ENCODE measurements at regions of chr1 and their contacts with region 1.

Region 1: DNA sequence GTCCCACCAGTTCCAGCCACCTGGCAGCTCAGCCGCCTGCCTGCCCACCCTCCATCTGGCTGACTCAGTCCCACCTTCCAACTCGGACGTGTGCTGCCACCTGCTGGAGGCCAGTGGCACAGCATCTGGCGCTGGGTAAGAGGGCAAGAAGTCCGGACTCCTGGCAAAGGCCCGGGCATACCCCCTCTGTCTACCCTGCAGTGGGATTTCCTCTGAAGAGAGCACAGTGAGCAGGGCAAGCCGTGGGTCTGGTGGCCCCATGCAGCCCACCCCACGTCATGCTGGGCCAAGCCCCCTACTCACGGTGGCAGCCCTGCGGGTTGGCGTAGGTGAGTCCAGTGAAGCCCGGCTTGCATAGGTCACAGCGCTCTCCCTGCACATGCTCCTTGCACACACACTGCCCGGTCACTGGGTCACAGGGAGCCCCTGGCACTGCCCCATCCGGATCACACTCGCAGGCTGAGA is 24.5 kb downstream of the LAMB3 start:
- DNase-seq: peak; percentile 67
- H3K4me3 Mint-ChIP-seq: no peak overlapping the region
- H3K27ac Mint-ChIP-seq: no peak overlapping the region
- H3K4me1 Mint-ChIP-seq: peaks cover 16% of the 10 kb centered on the region
- H3K27me3 Mint-ChIP-seq: no peaks in the 10 kb centered on the region

Region 2: GRCh38 chr1:209576798-209577197 is 51.0 kb before region 1 on chr1:
- intact Hi-C with region 1: loop called (anchors 1 kb)
- DNase-seq: peak; percentile 49
- H3K4me3 Mint-ChIP-seq: no peak overlapping the region
- H3K27ac Mint-ChIP-seq: no peak overlapping the region
- H3K4me1 Mint-ChIP-seq: peaks cover 7% of the 10 kb centered on the region
- H3K27me3 Mint-ChIP-seq: peaks cover 25% of the 10 kb centered on the region

Region 3: GRCh38 chr1:209601809-209602657 is 25.7 kb before region 1 on chr1:
- intact Hi-C with region 1: loop called (anchors 1 kb)
- DNase-seq: peak; percentile 14
- H3K4me3 Mint-ChIP-seq: no peak overlapping the region
- H3K27ac Mint-ChIP-seq: no peak overlapping the region
- H3K4me1 Mint-ChIP-seq: peaks cover 19% of the 10 kb centered on the region
- H3K27me3 Mint-ChIP-seq: peaks cover 26% of the 10 kb centered on the region

Region 4: DNA sequence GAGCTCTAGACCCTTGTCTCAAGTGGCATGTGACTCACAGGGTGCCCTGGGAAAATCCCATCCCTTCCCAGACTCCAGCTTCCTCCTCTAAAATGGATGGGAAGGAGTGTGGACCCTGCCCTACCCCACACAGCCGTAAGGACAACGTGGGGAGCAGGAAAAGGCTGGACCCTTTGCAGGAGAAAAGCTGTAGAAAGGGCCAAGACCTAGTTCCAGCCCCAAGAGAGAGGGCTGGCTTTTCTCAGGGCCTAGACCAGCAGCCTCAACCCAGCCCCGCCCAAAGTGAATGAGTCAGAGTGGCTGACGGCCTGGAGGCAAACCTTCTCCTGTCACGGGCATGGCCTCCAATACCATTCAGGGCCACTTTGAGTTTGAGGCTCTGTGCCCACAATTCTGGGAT is 23.4 kb after region 1 on chr1:
- intact Hi-C with region 1: loop called (anchors 2 kb)
- DNase-seq: peak; percentile 70
- H3K4me3 Mint-ChIP-seq: peak overlapping the region; percentile 58
- H3K27ac Mint-ChIP-seq: peak overlapping the region; percentile 96
- H3K4me1 Mint-ChIP-seq: peaks cover 76% of the 10 kb centered on the region
- H3K27me3 Mint-ChIP-seq: no peaks in the 10 kb centered on the region

Region 5: DNA sequence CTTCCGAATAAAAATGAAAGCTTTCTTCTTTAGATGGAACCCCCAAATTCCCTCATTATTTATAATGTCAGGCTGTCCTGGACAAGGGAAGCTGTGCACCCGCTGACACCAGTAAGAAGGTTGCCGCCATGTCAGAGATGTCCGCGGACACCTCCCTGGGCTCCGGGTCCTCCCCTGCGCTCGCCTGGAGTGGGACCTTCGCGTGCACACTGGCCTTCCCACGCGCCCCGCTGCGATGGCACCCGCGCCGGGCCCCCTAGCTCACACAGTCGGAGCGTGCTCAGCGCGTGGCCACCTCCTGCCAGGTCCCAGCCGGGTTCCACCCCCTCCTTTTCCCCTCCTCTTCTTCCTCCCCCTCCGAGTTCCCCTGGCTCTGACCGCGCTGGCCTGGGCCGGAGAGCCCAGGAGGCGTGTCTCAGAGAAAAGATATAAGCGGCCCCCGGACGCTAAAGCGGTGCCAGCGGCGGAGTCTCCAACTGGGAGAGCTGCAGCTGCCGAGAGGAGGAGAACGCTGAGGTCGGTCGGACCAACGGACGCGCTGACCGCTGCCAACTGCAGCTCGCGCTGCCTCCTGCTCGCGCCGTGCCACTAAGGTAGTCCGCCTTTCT is 47.3 kb after region 1 on chr1 and contains the start of gene G0S2:
- intact Hi-C with region 1: no loop called
- DNase-seq: peak; percentile 59
- H3K4me3 Mint-ChIP-seq: peak within 1 kb of the TSS; percentile 92
- H3K27ac Mint-ChIP-seq: peak within 1 kb of the TSS; percentile 94
- H3K4me1 Mint-ChIP-seq: peaks cover 87% of the 10 kb centered on the region
- H3K27me3 Mint-ChIP-seq: peaks cover 2% of the 10 kb centered on the region
- total RNA-seq, gene G0S2: 501 and 509 TPM in 2 replicates

Measured in activated T-helper 1 cell treated with anti-CD3 and anti-CD28 coated beads, Interleukin-12 subunit alpha, Interleukin-12 subunit beta, Interleukin-2, Interleukin-4 antibody, amounts not matched to agents 30 ng/mL and 10 ng/mL and 1 ng/mL, durations not matched to agents 14 hours and 24 hours and 36 hours (primary cell).